Activated CD4-positive, alpha-beta T cell treated with anti-CD3 and anti-CD28 coated beads for 36 hours (primary cell): ENCODE measurements at regions of chr4 and their contacts with region 1.

Region 1: GRCh38 chr4:26410385-26411293 is 79.6 kb downstream of the CCKAR start:
- DNase-seq: peak; percentile 32
- ATAC-seq: peak; percentile 75
- H3K4me3 Mint-ChIP-seq: no peak overlapping the region
- H3K27ac Mint-ChIP-seq: no peak overlapping the region
- H3K4me1 Mint-ChIP-seq: peaks cover 3% of the 10 kb centered on the region
- H3K27me3 Mint-ChIP-seq: no peaks in the 10 kb centered on the region

Region 2: DNA sequence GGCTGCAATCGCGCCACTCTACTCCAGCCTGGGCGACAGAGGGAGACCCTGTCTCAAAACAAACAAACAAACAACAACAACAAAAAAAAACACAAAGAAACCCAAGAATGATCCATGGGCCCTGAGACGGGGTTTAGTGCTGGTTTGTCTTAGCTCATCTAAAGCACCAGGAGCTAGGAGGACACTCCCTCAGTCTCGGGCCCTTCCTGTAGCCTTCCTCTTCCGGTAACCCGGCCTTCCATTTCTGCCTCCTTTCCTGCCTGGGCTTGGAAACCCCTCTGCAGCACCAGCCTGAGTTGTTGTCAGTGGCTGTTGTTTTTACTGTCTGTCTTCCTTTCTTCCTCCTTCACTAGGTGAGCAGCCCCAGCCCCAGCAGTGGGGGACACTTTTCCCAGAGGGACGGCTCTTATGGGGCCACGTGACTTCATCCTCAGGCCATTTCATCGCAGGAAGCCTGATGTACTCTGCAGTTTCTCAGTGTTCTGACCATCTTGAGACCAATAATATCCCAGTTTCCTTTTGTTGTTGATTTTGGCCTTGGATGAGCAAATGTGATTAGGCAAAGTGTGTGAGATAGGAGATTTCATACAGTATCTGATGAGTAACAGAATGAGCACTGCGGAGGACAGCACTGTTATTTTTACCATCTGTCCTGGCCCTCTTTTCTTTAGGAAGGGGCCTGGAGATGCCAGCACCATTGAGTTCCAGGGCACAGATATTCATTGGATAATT is 943.5 kb before region 1 on chr4:
- CTCF ChIA-PET with region 1: no interaction called
- POLR2A ChIA-PET with region 1: no interaction called
- intact Hi-C with region 1: no loop called
- DNase-seq: no peak
- ATAC-seq: no peak
- H3K4me3 Mint-ChIP-seq: no peak overlapping the region
- H3K27ac Mint-ChIP-seq: no peak overlapping the region
- H3K4me1 Mint-ChIP-seq: no peaks in the 10 kb centered on the region
- H3K27me3 Mint-ChIP-seq: peaks cover 2% of the 10 kb centered on the region

Region 3: DNA sequence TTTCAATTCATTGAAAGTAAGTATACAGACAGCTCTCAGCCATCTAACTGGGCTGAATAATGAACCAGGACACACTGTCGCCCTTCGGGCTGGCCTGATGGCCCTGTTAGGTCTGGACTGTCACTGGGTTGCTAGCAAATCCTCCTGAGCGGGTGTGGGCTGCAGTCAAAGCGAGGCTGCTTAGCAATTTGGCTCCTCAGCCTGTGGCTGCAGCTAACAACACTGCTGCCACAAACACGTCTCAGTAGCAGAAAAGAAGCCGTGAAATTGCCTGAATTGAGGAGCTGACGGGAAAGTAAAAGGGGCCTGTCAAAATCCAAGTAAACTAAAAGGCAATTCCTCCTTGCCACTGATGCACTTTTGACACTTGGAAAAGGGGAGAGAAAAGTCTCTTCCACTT is 423.8 kb before region 1 on chr4:
- CTCF ChIA-PET with region 1: interaction called, 32 read pairs
- POLR2A ChIA-PET with region 1: no interaction called
- intact Hi-C with region 1: loop called (anchors 1 kb)
- DNase-seq: no peak
- ATAC-seq: no peak
- H3K4me3 Mint-ChIP-seq: no peak overlapping the region
- H3K27ac Mint-ChIP-seq: no peak overlapping the region
- H3K4me1 Mint-ChIP-seq: peaks cover 4% of the 10 kb centered on the region
- H3K27me3 Mint-ChIP-seq: no peaks in the 10 kb centered on the region

Region 4: DNA sequence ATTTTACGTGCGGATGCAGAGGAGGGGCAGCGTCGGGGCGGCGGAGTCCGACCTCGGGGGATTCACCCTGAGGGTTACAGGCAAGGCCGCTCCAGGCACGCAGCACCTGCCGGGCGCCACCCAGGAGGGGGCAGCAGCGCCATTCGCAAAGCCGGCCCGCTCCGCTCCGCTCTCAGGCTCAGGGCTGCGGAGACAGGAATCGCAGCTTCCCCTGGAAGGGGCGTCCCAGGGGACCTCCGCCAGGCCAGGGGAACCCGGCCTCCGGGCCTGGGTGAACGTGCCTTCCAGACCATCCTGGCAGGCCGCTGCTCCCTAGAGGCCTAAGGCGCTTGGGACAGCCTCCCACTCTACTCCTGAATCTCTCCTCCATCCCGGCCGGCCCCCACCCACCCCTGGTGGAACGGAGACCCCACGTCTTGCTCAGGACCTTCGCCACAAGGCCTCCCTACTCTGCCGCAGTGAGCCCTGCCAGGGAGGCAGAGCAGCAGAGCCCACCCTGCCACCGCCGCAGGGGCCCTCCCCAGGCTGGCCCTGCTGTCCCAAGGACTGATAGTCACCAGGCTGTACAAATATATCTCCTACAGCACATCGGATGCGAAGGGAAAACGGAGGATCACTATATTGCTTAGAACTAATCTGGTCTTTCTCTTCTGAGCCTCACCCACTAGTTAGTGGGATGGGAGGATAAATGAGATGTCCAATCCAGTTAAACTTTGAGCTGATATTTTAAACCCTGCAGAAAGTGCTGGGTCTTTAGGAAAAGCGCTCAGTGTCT is 381.7 kb before region 1 on chr4:
- CTCF ChIA-PET with region 1: interaction called, 32 read pairs
- POLR2A ChIA-PET with region 1: no interaction called
- intact Hi-C with region 1: loop called (anchors 1 kb)
- DNase-seq: peak; percentile 88
- ATAC-seq: peak; percentile 94
- H3K4me3 Mint-ChIP-seq: no peak overlapping the region
- H3K27ac Mint-ChIP-seq: no peak overlapping the region
- H3K4me1 Mint-ChIP-seq: peaks cover 12% of the 10 kb centered on the region
- H3K27me3 Mint-ChIP-seq: peaks cover 11% of the 10 kb centered on the region

Region 5: GRCh38 chr4:26069218-26069617 is 341.4 kb before region 1 on chr4:
- CTCF ChIA-PET with region 1: interaction called, 6 read pairs
- POLR2A ChIA-PET with region 1: no interaction called
- intact Hi-C with region 1: loop called in 1 of 2 experiments (anchors 5 kb)
- DNase-seq: no peak
- ATAC-seq: peak; percentile 67
- H3K4me3 Mint-ChIP-seq: no peak overlapping the region
- H3K27ac Mint-ChIP-seq: no peak overlapping the region
- H3K4me1 Mint-ChIP-seq: peaks cover 20% of the 10 kb centered on the region
- H3K27me3 Mint-ChIP-seq: peaks cover 10% of the 10 kb centered on the region

Region 6: GRCh38 chr4:26330186-26330787 is 80.4 kb before region 1 on chr4:
- CTCF ChIA-PET with region 1: interaction called, 62 read pairs
- POLR2A ChIA-PET with region 1: no interaction called
- intact Hi-C with region 1: loop called (anchors 1 kb)
- DNase-seq: no peak
- ATAC-seq: peak; percentile 80
- H3K4me3 Mint-ChIP-seq: no peak overlapping the region
- H3K27ac Mint-ChIP-seq: peak overlapping the region; percentile 49
- H3K4me1 Mint-ChIP-seq: peaks cover 48% of the 10 kb centered on the region
- H3K27me3 Mint-ChIP-seq: no peaks in the 10 kb centered on the region